ENCODE measurements at regions of chr15 and their contacts with region 1.

Region 1: DNA sequence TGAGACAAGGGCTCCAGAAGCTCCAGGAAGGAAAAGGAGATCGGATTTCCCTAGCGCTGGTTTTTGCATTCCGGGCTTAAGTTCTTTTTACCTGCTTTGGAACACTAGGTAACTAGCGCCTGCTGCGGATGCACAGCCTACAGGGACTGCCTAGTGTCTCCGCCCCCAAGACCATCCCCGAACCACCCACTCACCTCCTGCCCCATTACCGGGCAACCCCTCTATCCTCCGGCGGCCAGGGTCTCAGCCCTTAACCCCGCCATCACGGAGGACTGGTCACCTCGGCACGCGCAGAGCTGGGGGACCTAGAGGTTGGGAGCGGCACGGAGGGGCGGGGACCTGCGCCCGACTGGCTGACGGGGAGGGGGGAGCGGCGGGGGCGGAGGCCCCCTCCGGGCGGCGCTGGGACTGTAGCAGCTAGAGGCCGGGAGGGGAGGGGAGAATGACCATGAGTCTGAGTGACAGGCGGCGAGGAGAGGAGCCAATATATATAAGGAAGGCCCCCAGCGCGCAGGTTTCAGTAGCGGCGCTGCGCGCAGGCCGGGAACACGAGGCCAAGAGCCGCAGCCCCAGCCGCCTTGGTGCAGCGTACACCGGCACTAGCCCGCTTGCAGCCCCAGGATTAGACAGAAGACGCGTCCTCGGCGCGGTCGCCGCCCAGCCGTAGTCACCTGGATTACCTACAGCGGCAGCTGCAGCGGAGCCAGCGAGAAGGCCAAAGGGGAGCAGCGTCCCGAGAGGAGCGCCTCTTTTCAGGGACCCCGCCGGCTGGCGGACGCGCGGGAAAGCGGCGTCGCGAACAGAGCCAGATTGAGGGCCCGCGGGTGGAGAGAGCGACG is at the start of gene DLL4:
- DNase-seq: peak; percentile 84
- ATAC-seq: peak; percentile 45
- H3K4me3 Mint-ChIP-seq: peak within 1 kb of the TSS; percentile 80
- H3K27ac Mint-ChIP-seq: no peak within 1 kb of the TSS
- H3K4me1 Mint-ChIP-seq: peaks cover 30% of the 10 kb centered on the region
- H3K27me3 Mint-ChIP-seq: peaks cover 97% of the 10 kb centered on the region
- CTCF ChIP-seq: no peak
- total RNA-seq, gene DLL4: 0.94 to 1.6 TPM (median 1.1 TPM) in 3 replicates

Region 2: DNA sequence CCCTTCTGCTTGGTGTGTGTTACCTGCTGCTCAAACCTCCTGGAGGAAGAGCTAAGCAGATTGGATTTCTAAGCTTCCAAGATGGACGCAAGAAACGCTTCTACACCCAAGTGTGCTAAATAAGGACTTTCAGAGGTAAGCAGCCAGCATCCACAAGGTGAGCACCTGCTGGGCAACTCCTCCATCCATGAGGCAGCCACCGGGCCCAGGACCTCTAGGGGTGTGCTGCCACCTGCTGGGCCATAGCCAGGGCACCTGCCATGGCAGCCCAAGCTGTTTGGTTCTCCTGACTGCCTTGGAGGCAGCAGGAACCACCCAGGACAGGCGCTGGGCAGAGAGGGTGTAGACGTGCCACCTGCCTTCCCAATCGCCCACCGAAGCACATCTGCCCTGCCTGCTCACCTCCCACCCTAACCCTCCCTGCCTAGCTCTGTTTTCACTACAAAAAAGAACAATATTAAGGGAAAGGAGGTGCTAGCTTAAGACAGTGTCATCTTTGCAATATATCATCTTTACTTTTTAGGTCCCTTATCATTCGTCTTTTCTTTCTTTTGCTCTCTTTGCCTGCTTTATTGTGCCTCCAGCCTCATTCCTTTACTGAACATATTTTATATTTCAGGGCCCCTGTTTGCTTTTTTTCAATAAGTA is 146.3 kb before region 1 on chr15:
- CTCF ChIA-PET with region 1: no interaction called
- POLR2A ChIA-PET with region 1: no interaction called
- DNase-seq: peak; percentile 75
- ATAC-seq: peak; percentile 74
- H3K4me3 Mint-ChIP-seq: no peak overlapping the region
- H3K27ac Mint-ChIP-seq: peak overlapping the region; percentile 54
- H3K4me1 Mint-ChIP-seq: peaks cover 37% of the 10 kb centered on the region
- H3K27me3 Mint-ChIP-seq: no peaks in the 10 kb centered on the region
- CTCF ChIP-seq: no peak

Region 3: DNA sequence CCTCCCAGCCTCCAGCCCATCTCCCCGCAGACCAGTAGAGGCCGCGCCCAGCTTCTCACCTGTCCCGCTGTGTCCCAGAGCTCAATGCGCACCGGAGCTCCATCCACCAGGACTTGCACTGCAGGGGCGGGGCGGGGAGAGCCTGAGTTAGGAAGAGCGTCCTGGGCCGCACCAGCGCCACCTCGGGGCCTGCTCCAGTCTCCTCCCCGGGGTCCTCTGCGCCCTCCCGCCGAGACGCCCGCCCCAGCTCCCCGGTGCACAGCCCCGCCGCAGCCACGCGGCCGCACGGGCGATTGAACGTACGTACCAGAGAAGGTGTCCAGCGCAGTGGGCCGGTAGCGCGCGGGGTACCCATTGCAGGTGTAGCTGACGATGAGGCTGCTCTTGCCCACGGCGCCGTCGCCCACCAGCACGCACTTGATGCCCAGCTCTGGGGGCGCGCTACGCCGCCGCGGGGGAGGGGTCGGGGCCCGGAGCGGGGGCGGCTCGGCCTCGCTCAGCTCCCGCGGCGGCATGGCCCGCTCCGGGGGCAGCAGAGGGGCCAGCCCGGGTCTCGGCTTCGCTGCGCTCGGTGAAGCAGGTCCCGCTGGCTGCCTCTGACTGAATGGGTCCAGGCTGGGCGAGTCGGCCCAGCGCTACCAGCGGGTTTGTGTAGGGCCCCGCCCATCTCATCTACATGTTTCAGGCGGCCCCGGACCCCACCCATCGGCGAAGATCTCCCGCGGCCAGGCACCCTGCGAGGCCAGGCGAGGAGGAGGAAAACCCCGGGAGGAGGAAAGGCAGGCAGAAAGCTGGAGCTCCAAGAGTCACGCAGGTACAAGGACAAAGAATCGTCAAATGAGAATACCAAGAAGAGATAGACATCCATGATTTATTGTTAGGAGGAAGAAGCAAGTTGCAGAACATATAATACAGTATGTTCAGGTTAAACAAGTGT is 55.1 kb before region 1 on chr15 and contains the start of gene RHOV:
- CTCF ChIA-PET with region 1: interaction called, 11 read pairs
- POLR2A ChIA-PET with region 1: interaction called, 3 read pairs
- DNase-seq: peak; percentile 89
- ATAC-seq: peak; percentile 80
- H3K4me3 Mint-ChIP-seq: peak within 1 kb of the TSS; percentile 79
- H3K27ac Mint-ChIP-seq: no peak within 1 kb of the TSS; the same call in none of the 2 replicates
- H3K4me1 Mint-ChIP-seq: peaks cover 36% of the 10 kb centered on the region
- H3K27me3 Mint-ChIP-seq: peaks cover 4% of the 10 kb centered on the region; the same call in 1 of the 2 replicates
- CTCF ChIP-seq: no peak
- total RNA-seq, gene RHOV: 5.0 to 5.4 TPM (median 5.1 TPM) in 3 replicates

Region 4: GRCh38 chr15:40906091-40906990 is 22.7 kb before region 1 on chr15:
- CTCF ChIA-PET with region 1: interaction called, 101 read pairs
- POLR2A ChIA-PET with region 1: interaction called, 8 read pairs
- DNase-seq: peak; percentile 95
- ATAC-seq: peak; percentile 82
- H3K4me3 Mint-ChIP-seq: peak overlapping the region; percentile 62
- H3K27ac Mint-ChIP-seq: no peak overlapping the region
- H3K4me1 Mint-ChIP-seq: peaks cover 14% of the 10 kb centered on the region
- H3K27me3 Mint-ChIP-seq: no peaks in the 10 kb centered on the region
- CTCF ChIP-seq: peak; percentile 83

Region 5: DNA sequence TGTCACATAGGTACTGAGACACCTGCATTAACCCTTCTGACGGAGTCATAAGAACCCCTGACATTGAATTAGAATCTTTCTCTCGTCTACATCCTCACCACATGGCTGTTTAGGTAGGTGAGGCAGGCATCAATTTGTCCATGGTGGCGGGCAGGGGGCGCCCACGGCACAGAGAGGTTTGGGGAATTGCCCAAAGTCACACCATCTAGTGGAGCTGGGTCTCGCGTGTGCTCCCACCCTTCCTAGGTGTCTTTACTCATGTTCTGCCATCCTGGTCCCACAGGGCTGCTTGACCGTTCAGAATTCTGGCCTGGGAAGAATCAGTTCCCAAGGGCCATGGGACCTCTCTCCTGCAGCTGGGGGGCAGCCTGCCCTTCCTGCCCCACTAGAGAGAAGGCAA is 14.6 kb before region 1 on chr15:
- CTCF ChIA-PET with region 1: interaction called, 101 read pairs
- POLR2A ChIA-PET with region 1: interaction called, 4 read pairs
- DNase-seq: no peak
- ATAC-seq: peak; percentile 31
- H3K4me3 Mint-ChIP-seq: no peak overlapping the region
- H3K27ac Mint-ChIP-seq: 0 out of 2 replicates have a peak overlapping the region, but pooled peaks have one; percentile 1
- H3K4me1 Mint-ChIP-seq: peaks cover 22% of the 10 kb centered on the region
- H3K27me3 Mint-ChIP-seq: 0 out of 2 replicates have a peak, but pooled peaks cover 2% of the 10 kb centered on the region
- CTCF ChIP-seq: no peak

Region 6: GRCh38 chr15:40952901-40953712 is 24.1 kb after region 1 on chr15 and contains the start of gene CHAC1:
- CTCF ChIA-PET with region 1: interaction called, 21 read pairs
- POLR2A ChIA-PET with region 1: interaction called, 73 read pairs
- DNase-seq: peak; percentile 99
- ATAC-seq: peak; percentile 83
- H3K4me3 Mint-ChIP-seq: peak within 1 kb of the TSS; percentile 83
- H3K27ac Mint-ChIP-seq: peak within 1 kb of the TSS; percentile 98
- H3K4me1 Mint-ChIP-seq: peaks cover 39% of the 10 kb centered on the region
- H3K27me3 Mint-ChIP-seq: no peaks in the 10 kb centered on the region
- CTCF ChIP-seq: no peak
- total RNA-seq, gene CHAC1: 17.2 to 31.0 TPM (median 17.7 TPM) in 3 replicates

Region 7: DNA sequence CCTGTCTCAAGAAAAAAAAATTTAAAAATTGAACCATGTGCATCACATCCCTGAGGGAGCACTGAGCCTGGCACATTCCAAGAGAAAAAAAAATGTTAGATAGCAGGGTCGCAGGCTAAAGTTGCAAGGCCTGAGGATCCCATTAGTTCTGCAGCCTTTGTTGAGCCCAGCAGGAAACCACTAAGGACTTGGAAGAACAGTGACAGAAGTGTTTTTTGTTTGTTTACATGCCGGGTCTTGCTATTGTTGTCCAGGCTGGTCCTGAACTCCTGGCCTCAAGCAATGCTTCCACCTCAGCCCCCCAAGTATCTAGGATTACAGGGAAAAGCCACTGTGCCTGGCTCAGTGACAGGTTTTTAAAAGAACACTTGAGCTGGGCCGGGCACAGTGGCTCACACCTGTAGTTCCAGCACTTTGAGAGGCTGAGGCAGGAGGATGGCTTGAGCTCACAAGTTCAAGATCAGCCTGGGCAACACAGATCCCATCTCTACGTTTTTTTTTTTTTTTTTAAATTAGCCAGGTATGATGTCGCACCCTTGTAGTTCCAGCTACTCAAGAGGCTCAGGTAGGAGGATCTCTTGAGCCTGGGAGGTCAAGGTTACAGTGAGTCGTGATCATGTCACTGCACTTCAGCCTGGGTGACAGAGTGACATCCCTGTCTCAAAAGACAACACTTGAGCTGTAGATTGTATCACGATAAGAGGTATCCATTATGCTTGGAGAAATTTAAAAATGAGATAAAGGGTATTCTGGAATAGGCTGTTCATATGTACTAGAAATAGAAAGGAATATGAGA is 39.4 kb after region 1 on chr15:
- CTCF ChIA-PET with region 1: interaction called, 13 read pairs
- POLR2A ChIA-PET with region 1: no interaction called
- DNase-seq: no peak
- ATAC-seq: peak; percentile 62
- H3K4me3 Mint-ChIP-seq: no peak overlapping the region
- H3K27ac Mint-ChIP-seq: no peak overlapping the region
- H3K4me1 Mint-ChIP-seq: peaks cover 31% of the 10 kb centered on the region
- H3K27me3 Mint-ChIP-seq: no peaks in the 10 kb centered on the region
- CTCF ChIP-seq: no peak

Region 8: DNA sequence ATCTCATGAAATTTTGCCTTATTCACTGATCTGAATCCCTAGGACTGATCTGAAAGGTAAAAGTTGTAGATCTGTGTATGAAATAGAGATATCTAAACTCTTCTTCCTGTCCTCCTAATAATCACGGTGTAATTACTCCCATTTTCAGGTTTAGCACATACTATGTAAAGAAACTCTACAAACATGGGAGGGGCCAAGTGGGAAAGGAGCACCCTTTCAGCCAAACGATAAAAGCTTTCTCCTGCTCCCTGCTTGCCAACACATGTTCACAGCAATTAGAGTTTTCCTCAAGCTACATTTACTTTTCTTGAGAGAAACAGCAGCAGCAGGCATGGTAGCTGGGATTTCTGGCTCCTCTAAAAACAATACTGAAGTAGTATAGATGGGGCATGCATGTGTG is 95.8 kb after region 1 on chr15:
- CTCF ChIA-PET with region 1: interaction called, 12 read pairs
- POLR2A ChIA-PET with region 1: no interaction called
- DNase-seq: no peak
- ATAC-seq: no peak
- H3K4me3 Mint-ChIP-seq: no peak overlapping the region
- H3K27ac Mint-ChIP-seq: no peak overlapping the region
- H3K4me1 Mint-ChIP-seq: no peaks in the 10 kb centered on the region
- H3K27me3 Mint-ChIP-seq: no peaks in the 10 kb centered on the region
- CTCF ChIP-seq: no peak